RWPE1 (cell line): ENCODE measurements at regions of chr3 and their contacts with region 1.

Region 1: DNA sequence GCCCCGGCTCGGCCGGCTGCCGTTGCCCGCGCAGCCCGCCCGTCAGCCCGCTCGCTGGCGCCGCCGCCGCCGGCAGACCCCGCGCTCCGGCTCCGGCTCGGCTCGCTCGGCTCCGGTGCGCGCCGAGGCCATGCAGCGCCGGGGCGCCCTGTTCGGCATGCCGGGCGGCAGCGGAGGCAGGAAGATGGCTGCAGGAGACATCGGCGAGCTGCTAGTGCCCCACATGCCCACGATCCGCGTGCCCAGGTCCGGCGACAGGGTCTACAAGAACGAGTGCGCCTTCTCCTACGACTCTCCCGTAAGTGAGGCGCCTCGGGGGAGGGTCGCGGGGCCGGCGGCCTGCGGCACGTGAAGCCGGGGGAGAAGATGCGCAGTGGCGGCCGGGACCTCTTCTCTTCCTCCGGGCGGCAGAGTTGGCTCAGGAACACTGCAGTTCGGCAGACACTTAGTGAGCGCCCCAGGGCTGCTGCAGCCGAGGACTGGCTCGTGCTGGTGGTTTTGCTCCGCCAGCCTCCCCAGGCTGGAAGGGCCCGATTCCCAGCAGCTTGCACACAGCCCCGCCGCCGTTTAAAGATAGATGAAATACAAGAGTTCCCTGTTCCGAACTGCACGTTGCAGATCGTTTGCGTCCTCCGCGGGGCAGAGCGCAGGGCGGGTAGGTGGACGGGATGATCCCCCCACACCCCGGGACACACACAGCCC is 407 bp downstream of the USP13 start:
- DNase-seq: peak; percentile 64
- H3K27ac ChIP-seq: peak overlapping the region; percentile 93
- CTCF ChIP-seq: no peak

Region 2: GRCh38 chr3:179037351-179037750 is 615.9 kb before region 1 on chr3:
- CTCF ChIA-PET with region 1: no interaction called
- POLR2A ChIA-PET with region 1: no interaction called
- DNase-seq: peak; percentile 81
- H3K27ac ChIP-seq: peak overlapping the region; percentile 73
- CTCF ChIP-seq: no peak

Region 3: GRCh38 chr3:179347345-179348194 is 305.7 kb before region 1 on chr3 and contains the start of gene MFN1:
- CTCF ChIA-PET with region 1: no interaction called
- POLR2A ChIA-PET with region 1: no interaction called
- DNase-seq: peak; percentile 90
- H3K27ac ChIP-seq: peak within 1 kb of the TSS; percentile 83
- CTCF ChIP-seq: no peak

Region 4: GRCh38 chr3:179604321-179605078 is 48.7 kb before region 1 on chr3 and contains the starts of genes MRPL47 and NDUFB5:
- CTCF ChIA-PET with region 1: no interaction called
- POLR2A ChIA-PET with region 1: no interaction called
- DNase-seq: peak; percentile 95
- H3K27ac ChIP-seq: peak within 1 kb of the TSS; percentile 78
- CTCF ChIP-seq: no peak

Region 5: GRCh38 chr3:179624451-179624850 is 28.8 kb before region 1 on chr3:
- CTCF ChIA-PET with region 1: no interaction called
- POLR2A ChIA-PET with region 1: no interaction called
- DNase-seq: no peak
- H3K27ac ChIP-seq: no peak overlapping the region
- CTCF ChIP-seq: no peak

Region 6: DNA sequence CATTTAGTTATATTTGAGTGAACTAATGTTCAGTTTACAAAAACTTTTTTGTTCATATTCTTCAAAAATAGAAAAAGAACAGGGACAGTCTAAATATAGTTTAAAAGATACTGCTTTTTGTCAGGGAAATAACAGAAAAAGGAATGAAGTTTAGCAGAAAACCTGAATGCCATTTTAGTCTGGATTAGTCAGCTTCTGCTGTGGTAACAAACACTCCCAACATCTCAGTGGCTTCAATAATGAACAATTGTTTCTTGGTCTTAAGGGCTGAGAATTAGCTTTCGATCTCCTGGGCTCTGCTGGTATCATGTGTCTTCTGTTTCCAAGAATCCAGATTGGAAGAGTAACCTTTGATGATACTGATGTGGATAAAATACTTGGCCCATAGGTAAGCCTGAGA is 12.8 kb before region 1 on chr3:
- CTCF ChIA-PET with region 1: interaction called, 12 read pairs
- POLR2A ChIA-PET with region 1: no interaction called
- DNase-seq: no peak
- H3K27ac ChIP-seq: no peak overlapping the region
- CTCF ChIP-seq: no peak

Region 7: GRCh38 chr3:179681492-179682249 is 28.4 kb after region 1 on chr3:
- CTCF ChIA-PET with region 1: interaction called, 13 read pairs
- POLR2A ChIA-PET with region 1: no interaction called
- DNase-seq: no peak
- H3K27ac ChIP-seq: no peak overlapping the region
- CTCF ChIP-seq: no peak